HCT116 (cell line): ENCODE measurements at regions of chr22 and their contacts with region 1.

Region 1: GRCh38 chr22:42649246-42650099 is at the start of gene CYB5R3:
- DNase-seq: peak; percentile 42
- ATAC-seq: peak; percentile 91
- H3K4me3 ChIP-seq: peak within 1 kb of the TSS; percentile 98 to 100
- H3K27ac ChIP-seq: peak within 1 kb of the TSS; percentile 84
- H3K4me1 ChIP-seq: peaks cover 5 to 27% of the 10 kb centered on the region in 2 experiments; a peak in 3 of 4 replicates
- H3K27me3 ChIP-seq: no peaks in the 10 kb centered on the region
- CTCF ChIP-seq: no peak
- POLR2A ChIP-seq: peak; percentile 50
- RAD21 ChIP-seq: no peak
- total RNA-seq, gene CYB5R3: 127 TPM

Region 2: DNA sequence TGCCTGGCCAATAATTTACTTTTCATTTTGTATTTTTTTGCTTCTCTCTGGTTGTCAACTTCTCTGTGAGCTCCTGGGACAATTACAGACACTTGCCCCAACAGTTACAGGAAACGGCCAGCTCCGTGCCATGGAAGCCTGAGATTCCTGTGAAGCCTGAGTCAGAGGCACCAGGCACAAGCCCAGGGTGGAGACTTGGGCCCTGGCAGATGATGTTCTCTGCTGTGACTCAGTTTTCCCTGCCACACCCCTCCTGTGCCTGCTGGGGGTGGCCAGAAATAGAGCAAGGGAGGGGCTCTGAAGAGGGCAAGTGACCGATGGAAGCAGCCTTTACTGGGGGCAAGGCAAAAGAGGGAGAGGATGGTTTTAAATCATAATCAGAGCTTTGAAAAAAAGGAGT is 13.9 kb before region 1 on chr22:
- CTCF ChIA-PET with region 1: no interaction called
- POLR2A ChIA-PET with region 1: interaction called, 17 read pairs
- RAD21 ChIA-PET with region 1: no interaction called
- intact Hi-C with region 1: no loop called
- DNase-seq: peak; percentile 85
- ATAC-seq: peak; percentile 91
- H3K4me3 ChIP-seq: peak overlapping the region; percentile 9 to 44; a peak in 2 of 4 replicates
- H3K27ac ChIP-seq: peak overlapping the region; percentile 90
- H3K4me1 ChIP-seq: peaks cover 14 to 52% of the 10 kb centered on the region in 2 experiments
- H3K27me3 ChIP-seq: no peaks in the 10 kb centered on the region
- CTCF ChIP-seq: no peak
- POLR2A ChIP-seq: no peak
- RAD21 ChIP-seq: no peak